Pancreas (tissue), 10 donors: ENCODE measurements at regions of chr9 and their contacts with region 1.

Region 1: DNA sequence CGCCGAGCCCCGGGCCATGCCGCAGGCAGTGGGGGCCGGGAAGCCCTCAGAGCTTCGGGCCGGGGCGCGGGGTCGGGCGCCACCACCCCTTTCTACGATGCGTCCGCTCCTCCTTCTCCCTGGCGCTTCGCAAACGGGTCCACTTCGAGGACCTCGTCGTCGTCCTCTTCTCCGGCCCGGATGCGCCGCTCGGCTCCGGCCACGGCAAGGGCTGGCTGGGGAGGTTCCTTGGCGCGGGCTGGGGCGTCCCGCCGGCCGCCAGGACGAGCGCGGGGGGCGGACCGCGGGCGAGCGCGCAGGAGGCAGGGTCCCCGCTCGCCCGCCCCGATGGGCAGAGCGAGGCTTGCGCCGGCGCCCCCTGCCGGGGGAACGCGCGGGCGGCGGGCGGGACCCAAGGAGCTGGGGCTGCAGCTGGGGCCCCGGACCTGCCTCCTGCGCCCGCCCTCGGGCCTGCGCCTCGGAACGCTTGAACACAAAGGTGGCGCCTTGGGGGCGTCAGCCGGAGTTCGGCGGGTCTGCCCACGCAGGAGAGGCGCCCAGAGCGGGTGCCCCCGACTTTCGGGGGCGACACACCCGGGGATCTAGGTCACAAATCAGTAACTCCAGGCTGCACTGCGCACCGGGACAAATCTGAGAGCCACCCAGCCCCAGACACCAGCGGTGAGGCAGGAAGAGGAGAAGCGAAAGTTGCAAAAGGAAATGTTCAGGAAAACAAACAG is at the start of gene ROR2:
- DNase-seq: peak; percentile 25 to 88 (median 66)
- ATAC-seq: peak; percentile 79 to 86 (median 84)
- H3K4me3 ChIP-seq: peak within 1 kb of the TSS; percentile 21 to 48 (median 31)
- H3K27ac ChIP-seq: peak within 1 kb of the TSS in 2 of 4 donors; percentile 4 to 21
- H3K4me1 ChIP-seq: peaks cover 0 to 15% (median 3%) of the 10 kb centered on the region in 3 donors
- H3K27me3 ChIP-seq: peaks cover 0 to 10% (median 3%) of the 10 kb centered on the region in 4 donors
- CTCF ChIP-seq: peak; percentile 22 to 65 (median 36)
- total RNA-seq, gene ROR2: 0.67 to 6.3 (median 1.3) TPM

Region 2: DNA sequence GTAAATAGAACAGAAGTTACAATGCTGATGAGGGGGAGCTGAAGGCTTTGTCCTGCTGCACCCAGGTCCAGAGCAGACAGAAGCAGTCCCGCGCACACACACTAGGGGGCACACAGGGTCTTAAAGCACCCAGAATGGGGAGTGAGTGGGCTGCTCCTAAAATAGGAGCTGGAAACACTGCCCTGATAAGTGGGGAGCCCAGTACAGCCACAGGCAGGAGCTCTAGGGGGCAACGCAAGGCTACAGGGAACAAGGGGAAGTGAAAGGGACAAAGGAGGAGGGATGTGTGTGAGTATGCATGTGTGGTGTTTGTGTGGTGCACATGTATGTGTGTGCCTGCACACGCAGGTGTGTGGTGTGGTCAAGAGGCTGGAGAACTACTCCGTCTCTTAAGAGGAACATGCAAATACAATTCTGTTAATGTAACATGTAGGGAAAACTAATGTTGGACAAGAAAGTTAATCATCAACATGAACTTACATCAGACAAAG is 191.6 kb before region 1 on chr9:
- intact Hi-C with region 1: no loop called
- DNase-seq: peak in 1 of 6 donors; percentile 36
- ATAC-seq: no peak
- H3K4me3 ChIP-seq: no peak overlapping the region
- H3K27ac ChIP-seq: no peak overlapping the region
- H3K4me1 ChIP-seq: no peaks in the 10 kb centered on the region
- H3K27me3 ChIP-seq: no peaks in the 10 kb centered on the region
- CTCF ChIP-seq: peak in 1 of 4 donors; percentile 7

Region 3: DNA sequence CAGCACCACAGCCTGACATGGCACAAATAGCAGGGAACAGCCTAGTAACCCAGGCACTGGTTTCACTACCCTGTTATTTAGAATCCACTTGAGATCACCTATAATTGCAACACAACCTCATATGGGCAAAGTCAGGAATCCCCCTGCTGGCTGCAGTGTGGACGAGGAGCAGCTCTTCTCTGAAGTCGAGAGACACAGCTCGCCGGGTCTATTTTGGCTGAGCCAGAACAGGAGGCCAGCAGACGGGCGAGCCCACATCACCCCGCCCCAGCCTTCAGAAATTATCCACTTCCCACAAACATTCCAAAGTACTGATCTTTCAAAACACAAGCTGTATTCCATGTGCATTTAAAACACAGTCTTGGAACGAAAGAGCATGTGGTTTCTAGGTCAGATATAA is 179.1 kb before region 1 on chr9:
- intact Hi-C with region 1: loop called in 2 of 3 experiments (anchors 5 kb)
- DNase-seq: no peak
- ATAC-seq: peak in 3 of 4 donors; percentile 49 to 61 (median 60)
- H3K4me3 ChIP-seq: no peak overlapping the region
- H3K27ac ChIP-seq: no peak overlapping the region
- H3K4me1 ChIP-seq: no peaks in the 10 kb centered on the region
- H3K27me3 ChIP-seq: no peaks in the 10 kb centered on the region
- CTCF ChIP-seq: no peak

Region 4: DNA sequence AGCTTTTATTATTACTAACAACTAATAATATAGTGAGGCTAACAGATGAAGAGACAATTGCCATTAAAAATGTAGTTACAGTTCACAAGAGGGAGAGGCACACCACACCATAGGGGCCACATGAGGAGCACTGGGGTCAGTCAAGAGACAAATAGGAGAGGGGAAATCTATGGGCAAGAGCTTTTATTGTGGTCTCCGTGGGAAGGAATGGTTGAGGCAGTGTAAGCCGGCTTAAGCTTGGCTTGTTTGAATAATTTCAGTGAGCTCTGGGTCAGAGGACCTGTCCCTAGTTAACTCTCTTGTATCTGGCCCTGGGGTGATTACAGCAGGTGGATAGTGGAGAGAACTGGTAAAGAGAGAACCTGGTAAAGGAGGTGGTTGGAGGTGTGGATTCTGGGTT is 419.0 kb after region 1 on chr9:
- intact Hi-C with region 1: no loop called
- DNase-seq: no peak
- ATAC-seq: no peak
- H3K4me3 ChIP-seq: no peak overlapping the region
- H3K27ac ChIP-seq: no peak overlapping the region
- H3K4me1 ChIP-seq: no peaks in the 10 kb centered on the region
- H3K27me3 ChIP-seq: no peaks in the 10 kb centered on the region
- CTCF ChIP-seq: no peak

Region 5: GRCh38 chr9:92942688-92943616 is 992.8 kb after region 1 on chr9:
- intact Hi-C with region 1: no loop called
- DNase-seq: no peak
- ATAC-seq: peak in 2 of 4 donors; percentile 17 to 39
- H3K4me3 ChIP-seq: no peak overlapping the region
- H3K27ac ChIP-seq: no peak overlapping the region
- H3K4me1 ChIP-seq: peaks cover 0 to 3% (median 0%) of the 10 kb centered on the region in 3 donors
- H3K27me3 ChIP-seq: no peaks in the 10 kb centered on the region
- CTCF ChIP-seq: no peak